ENCODE measurements at regions of chr15 and their contacts with region 1.

Region 1: DNA sequence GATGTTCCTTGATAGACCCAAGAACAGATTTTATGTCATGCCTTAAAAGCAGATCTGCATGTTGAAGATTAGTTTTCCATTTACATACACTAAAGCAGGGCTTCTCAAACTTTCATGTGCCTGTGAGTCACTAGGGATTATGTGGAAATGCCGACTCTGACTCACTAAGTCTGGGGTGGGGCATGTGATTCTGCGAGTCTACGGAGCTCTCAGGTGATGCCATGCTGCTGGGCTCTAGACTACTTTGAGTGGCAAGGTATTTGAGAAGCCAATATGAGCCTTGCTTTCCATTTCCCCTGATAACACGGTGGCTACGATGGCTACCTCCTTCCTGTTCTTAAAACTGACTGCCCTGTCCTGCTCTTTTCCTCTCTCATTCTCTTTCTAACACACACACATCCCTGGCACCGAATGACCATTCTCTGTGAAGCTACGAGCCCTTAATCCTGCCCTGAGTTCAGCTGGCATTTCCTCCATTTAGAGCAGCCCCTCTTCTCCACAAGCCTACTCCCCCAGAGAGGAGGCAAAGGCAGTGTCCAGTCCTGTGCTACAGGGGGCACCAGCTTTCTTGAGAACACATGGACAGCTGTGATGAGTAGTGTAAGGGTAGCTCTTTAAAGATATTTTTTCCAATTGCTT is 39.7 kb upstream of the PYGO1 start:
- DNase-seq: peak; percentile 85 to 92
- ATAC-seq: peak; percentile 90 to 92
- H3K4me3 ChIP-seq: peak overlapping the region in 3 of 4 donors; percentile 25 to 46 (median 43)
- H3K27ac ChIP-seq: peak overlapping the region; percentile 88 to 97 (median 94)
- H3K4me1 ChIP-seq: peaks cover 30 to 38% of the 10 kb centered on the region in 2 donors
- H3K27me3 ChIP-seq: no peaks in the 10 kb centered on the region
- CTCF ChIP-seq: no peak
- POLR2A ChIP-seq: peak; percentile 63 to 82

Region 2: GRCh38 chr15:55394694-55395093 is 233.2 kb before region 1 on chr15:
- in situ Hi-C with region 1: no loop called
- intact Hi-C with region 1: loop called (anchors 5 kb)
- DNase-seq: peak; percentile 57 to 84
- ATAC-seq: peak; percentile 98 to 99
- H3K4me3 ChIP-seq: peak overlapping the region in 1 of 4 donors; percentile 7
- H3K27ac ChIP-seq: peak overlapping the region; percentile 76 to 85 (median 80)
- H3K4me1 ChIP-seq: peaks cover 11 to 20% of the 10 kb centered on the region in 2 donors
- H3K27me3 ChIP-seq: no peaks in the 10 kb centered on the region
- CTCF ChIP-seq: no peak
- POLR2A ChIP-seq: peak in 1 of 2 donors; percentile 26

Region 3: DNA sequence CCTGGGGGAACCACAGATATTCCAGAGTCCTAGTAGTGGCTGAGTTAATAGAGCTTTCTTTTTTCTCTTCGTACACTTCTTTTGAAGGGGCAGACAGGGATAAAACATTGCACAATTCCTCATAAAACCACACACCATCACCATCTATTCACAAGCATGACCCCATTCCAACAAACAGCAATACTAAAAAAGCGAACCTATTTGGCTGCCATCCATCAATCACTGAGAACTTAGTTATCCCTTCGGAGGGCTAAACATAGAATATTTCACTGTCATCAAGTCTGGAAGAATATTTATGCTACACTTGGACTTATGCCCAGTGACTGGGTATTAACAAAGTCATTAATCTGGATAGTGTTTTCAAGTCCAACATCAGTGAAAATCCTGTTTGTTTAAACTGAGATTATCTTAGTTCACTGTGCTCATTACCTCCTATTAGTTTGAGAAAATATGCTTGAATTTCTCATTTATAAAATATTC is 195.4 kb after region 1 on chr15:
- in situ Hi-C with region 1: no loop called
- intact Hi-C with region 1: no loop called
- DNase-seq: no peak
- ATAC-seq: peak; percentile 8 to 9
- H3K4me3 ChIP-seq: no peak overlapping the region
- H3K27ac ChIP-seq: peak overlapping the region in 2 of 4 donors; percentile 1 to 38
- H3K4me1 ChIP-seq: no peaks in the 10 kb centered on the region
- H3K27me3 ChIP-seq: no peaks in the 10 kb centered on the region
- CTCF ChIP-seq: no peak
- POLR2A ChIP-seq: no peak

Region 4: DNA sequence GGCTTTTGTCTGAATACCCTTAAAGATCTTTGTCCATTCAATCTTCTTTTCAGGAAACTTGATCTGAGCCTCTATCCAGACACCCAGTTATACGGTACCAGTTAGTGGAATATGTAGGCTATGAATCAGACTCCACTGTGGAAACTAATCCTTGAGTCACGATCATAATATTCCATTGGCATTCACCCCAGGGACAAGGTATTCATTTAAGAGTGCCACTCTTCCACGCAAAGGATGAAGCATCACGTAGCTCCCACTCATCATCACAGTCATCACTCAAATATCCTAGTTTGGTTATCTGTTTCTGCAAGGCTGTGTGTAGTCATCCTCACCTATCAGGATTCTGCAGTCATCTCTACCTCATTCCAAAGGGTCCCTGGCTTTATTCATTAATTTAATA is 279.9 kb after region 1 on chr15:
- in situ Hi-C with region 1: loop called in 2 of 4 experiments (anchors 25 kb)
- intact Hi-C with region 1: loop called (anchors 5 kb)
- DNase-seq: peak; percentile 47 to 52
- ATAC-seq: peak; percentile 79 to 88
- H3K4me3 ChIP-seq: peak overlapping the region in 3 of 4 donors; percentile 10 to 68 (median 33)
- H3K27ac ChIP-seq: peak overlapping the region; percentile 84 to 94 (median 88)
- H3K4me1 ChIP-seq: peaks cover 17 to 32% of the 10 kb centered on the region in 2 donors
- H3K27me3 ChIP-seq: no peaks in the 10 kb centered on the region
- CTCF ChIP-seq: no peak
- POLR2A ChIP-seq: peak in 1 of 2 donors; percentile 19

Measured in gastrocnemius medialis (tissue), 4 donors.